ENCODE measurements at regions of chr11 and their contacts with region 1.

Region 1: DNA sequence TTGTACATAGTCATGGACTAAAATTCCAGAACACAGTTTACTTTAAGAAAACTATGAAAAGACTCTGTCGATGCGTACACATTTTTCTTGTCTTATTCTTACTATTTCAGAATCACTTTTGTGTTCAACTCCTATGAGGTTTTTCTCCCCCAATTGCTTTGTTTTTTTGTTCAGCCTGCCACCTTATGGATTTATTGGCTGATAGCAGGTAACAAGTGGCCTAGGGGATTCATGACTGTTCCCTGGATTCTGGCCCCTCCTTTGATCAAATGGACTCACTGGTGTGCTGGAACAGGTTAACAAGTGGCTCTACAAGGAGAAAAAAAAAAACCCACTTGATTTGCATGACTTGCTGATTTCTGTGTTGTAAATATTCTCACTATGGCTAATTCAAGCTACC is 10.6 kb downstream of the MMP20 start:
- DNase-seq: no peak
- H3K4me3 Mint-ChIP-seq: no peak overlapping the region
- H3K27ac Mint-ChIP-seq: no peak overlapping the region
- H3K4me1 Mint-ChIP-seq: peaks cover 10% of the 10 kb centered on the region
- H3K27me3 Mint-ChIP-seq: no peaks in the 10 kb centered on the region

Region 2: GRCh38 chr11:102317099-102317767 is 297.3 kb before region 1 on chr11 and contains the start of gene BIRC3:
- CTCF ChIA-PET with region 1: interaction called, 10 read pairs
- POLR2A ChIA-PET with region 1: no interaction called
- intact Hi-C with region 1: no loop called
- DNase-seq: peak; percentile 96
- H3K4me3 Mint-ChIP-seq: peak within 1 kb of the TSS; percentile 95
- H3K27ac Mint-ChIP-seq: peak within 1 kb of the TSS; percentile 100
- H3K4me1 Mint-ChIP-seq: peaks cover 56% of the 10 kb centered on the region
- H3K27me3 Mint-ChIP-seq: no peaks in the 10 kb centered on the region
- total RNA-seq, gene BIRC3: 135 to 139 TPM

Region 3: DNA sequence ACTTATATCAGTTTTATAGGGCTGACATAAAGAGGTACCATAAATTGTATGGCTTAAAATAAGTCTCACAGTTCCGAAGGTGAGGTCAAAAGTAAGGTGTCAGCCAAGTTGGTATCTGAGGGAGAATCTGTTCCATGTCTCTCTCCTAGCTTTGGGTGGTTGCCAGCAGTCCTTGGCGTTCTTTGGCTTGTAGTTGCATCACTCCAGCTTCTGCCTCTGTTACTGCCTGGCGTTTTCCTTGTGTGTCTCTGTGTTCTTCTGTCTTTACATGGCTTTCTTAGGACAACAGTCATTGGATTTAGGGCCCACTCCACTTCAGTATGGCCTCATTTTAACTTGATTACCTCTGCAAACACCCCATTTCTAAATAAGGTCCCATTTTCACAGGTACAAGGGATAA is 100.6 kb before region 1 on chr11:
- CTCF ChIA-PET with region 1: no interaction called
- POLR2A ChIA-PET with region 1: no interaction called
- intact Hi-C with region 1: loop called (anchors 5 kb)
- DNase-seq: no peak
- H3K4me3 Mint-ChIP-seq: no peak overlapping the region
- H3K27ac Mint-ChIP-seq: no peak overlapping the region
- H3K4me1 Mint-ChIP-seq: no peaks in the 10 kb centered on the region
- H3K27me3 Mint-ChIP-seq: no peaks in the 10 kb centered on the region

Region 4: DNA sequence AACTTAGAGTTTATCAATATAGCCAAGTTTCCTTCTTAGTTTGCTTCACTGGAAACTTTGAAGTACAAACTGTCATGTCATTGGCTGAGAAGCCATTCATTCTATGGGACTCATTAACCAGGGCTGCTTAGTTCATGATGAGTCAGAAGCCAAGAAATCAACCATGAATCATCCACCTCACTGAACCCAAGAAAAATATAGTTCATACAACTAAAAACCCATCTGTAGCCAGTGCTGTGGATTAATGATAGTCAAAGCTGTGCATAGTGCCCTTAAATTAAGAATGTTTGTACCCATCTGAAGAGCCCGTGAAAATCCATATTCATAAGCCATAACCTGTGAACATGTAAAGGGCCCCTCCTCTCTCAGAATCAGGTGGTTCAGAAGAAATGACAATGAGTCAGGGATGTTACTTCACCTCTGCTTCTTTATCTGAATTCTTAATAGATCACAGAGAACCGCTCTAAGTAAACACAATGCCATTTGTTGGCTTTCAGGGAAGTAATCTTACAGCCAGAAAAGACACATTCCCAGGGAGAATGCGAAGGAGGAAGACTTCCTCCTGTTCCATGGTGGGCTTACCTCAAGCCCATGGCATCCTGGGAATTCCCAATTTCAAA is 14.7 kb before region 1 on chr11:
- CTCF ChIA-PET with region 1: interaction called, 14 read pairs
- POLR2A ChIA-PET with region 1: no interaction called
- intact Hi-C with region 1: no loop called
- DNase-seq: no peak
- H3K4me3 Mint-ChIP-seq: no peak overlapping the region
- H3K27ac Mint-ChIP-seq: peak overlapping the region; percentile 75
- H3K4me1 Mint-ChIP-seq: peaks cover 35% of the 10 kb centered on the region
- H3K27me3 Mint-ChIP-seq: peaks cover 1% of the 10 kb centered on the region

Region 5: DNA sequence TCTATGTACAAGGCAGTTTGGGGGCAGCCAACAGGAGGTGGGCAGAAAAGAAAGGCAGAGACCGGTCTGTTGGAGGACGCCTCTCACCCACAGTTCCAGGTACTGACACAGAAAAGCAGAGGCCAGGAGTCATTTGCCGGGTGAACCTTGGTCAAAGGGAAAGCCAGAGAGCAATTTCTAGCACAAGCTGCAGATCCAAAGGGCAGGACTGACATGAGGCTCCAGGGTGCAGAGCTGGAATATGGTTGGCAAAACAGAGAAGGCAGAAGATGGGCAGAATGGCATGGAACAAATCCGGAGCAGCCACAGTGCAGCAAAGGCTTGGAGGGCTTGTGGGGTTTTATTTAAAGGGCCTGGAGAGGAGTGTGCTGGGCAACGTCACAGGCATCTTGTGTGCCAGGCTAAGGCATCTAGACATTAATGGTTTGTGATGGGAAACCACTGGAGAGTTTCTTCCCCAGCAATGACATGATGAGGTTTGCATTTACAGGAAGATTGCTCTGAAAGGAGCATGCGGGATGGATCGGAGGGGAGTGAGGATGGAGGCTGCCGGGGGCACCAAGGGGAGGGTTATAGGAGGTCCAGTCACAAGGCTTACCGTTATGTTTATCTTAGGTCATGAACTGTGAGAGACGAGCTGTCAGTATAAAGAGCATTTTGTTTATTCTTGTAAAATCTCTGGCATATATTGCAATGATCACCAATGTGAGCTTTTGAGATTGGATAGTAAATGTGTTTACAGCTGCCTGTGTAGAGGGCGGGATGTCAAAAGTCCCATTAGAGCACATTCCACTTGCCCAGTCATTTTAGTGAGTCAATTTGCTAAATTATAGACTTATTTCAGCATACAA is 16.3 kb after region 1 on chr11:
- CTCF ChIA-PET with region 1: no interaction called
- POLR2A ChIA-PET with region 1: no interaction called
- intact Hi-C with region 1: no loop called
- DNase-seq: no peak
- H3K4me3 Mint-ChIP-seq: no peak overlapping the region
- H3K27ac Mint-ChIP-seq: no peak overlapping the region
- H3K4me1 Mint-ChIP-seq: no peaks in the 10 kb centered on the region
- H3K27me3 Mint-ChIP-seq: peaks cover 5% of the 10 kb centered on the region

Region 6: GRCh38 chr11:102695201-102695600 is 80.7 kb after region 1 on chr11:
- CTCF ChIA-PET with region 1: no interaction called
- POLR2A ChIA-PET with region 1: no interaction called
- intact Hi-C with region 1: no loop called
- DNase-seq: no peak
- H3K4me3 Mint-ChIP-seq: no peak overlapping the region
- H3K27ac Mint-ChIP-seq: no peak overlapping the region
- H3K4me1 Mint-ChIP-seq: no peaks in the 10 kb centered on the region
- H3K27me3 Mint-ChIP-seq: peaks cover 7% of the 10 kb centered on the region